ENCODE measurements at regions of chr12 and their contacts with region 1.

Region 1: GRCh38 chr12:54749191-54749818 is 101.1 kb upstream of the DCD start:
- DNase-seq: peak in 7 of 9 donors; percentile 33 to 73 (median 63)
- ATAC-seq: peak; percentile 91
- H3K4me3 ChIP-seq: no peak overlapping the region
- H3K4me3 Mint-ChIP-seq: peak overlapping the region in 8 of 10 donors; percentile 24 to 79 (median 62)
- H3K27ac ChIP-seq: no peak overlapping the region
- H3K27ac Mint-ChIP-seq: peak overlapping the region in 6 of 9 donors; percentile 33 to 84 (median 55)
- H3K4me1 ChIP-seq: peaks cover 4 to 16% of the 10 kb centered on the region in 2 donors
- H3K4me1 Mint-ChIP-seq: peaks cover 10 to 38% (median 30%) of the 10 kb centered on the region in 7 donors
- H3K27me3 ChIP-seq: no peaks in the 10 kb centered on the region
- H3K27me3 Mint-ChIP-seq: peaks cover 0 to 26% (median 0%) of the 10 kb centered on the region in 5 donors

Region 2: DNA sequence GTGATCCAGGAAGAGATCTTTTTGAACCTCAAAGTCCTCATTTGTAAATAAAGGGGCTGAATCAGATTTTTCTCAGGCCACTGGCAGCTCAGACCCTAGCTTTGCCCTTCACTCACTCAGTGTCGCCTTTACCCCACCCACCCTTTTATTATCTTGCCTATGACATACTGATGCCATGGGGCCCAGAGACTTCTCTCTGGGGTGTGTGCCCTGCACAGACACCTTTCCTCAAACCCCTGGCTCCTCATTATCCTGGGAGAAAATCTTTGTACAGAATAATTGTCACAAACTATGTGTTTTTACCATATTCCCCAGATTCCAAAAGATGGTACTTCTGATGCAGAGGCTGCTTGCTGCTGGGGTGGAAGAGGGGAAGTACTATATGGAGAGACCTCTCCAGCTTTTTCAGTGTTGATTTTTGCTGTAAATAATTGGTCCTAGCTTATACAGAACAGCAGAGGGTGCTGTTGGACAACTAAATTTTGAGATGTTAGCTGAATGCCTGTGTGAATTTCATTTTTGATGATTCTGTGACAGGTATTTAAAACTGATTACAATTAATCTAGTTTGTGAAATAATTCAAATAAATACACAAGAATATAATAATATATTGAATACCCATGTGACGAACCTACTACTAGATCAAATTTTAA is 47.2 kb before region 1 on chr12:
- CTCF ChIA-PET with region 1: interaction called, 10 read pairs
- POLR2A ChIA-PET with region 1: no interaction called
- intact Hi-C with region 1: loop called in 1 of 2 experiments (anchors 1 kb)
- DNase-seq: peak in 7 of 9 donors; percentile 16 to 67 (median 56)
- ATAC-seq: peak; percentile 81
- H3K4me3 ChIP-seq: no peak overlapping the region
- H3K4me3 Mint-ChIP-seq: no peak overlapping the region
- H3K27ac ChIP-seq: no peak overlapping the region
- H3K27ac Mint-ChIP-seq: no peak overlapping the region
- H3K4me1 ChIP-seq: no peaks in the 10 kb centered on the region
- H3K4me1 Mint-ChIP-seq: no peaks in the 10 kb centered on the region
- H3K27me3 ChIP-seq: no peaks in the 10 kb centered on the region
- H3K27me3 Mint-ChIP-seq: peaks cover 0 to 27% (median 6%) of the 10 kb centered on the region in 5 donors

Region 3: GRCh38 chr12:54759751-54760150 is 10.4 kb after region 1 on chr12:
- CTCF ChIA-PET with region 1: interaction called, 28 read pairs
- POLR2A ChIA-PET with region 1: interaction called, 4 read pairs
- intact Hi-C with region 1: loop called in 1 of 2 experiments (anchors 1 kb)
- DNase-seq: peak in 3 of 9 donors; percentile 14 to 45 (median 26)
- ATAC-seq: no peak
- H3K4me3 ChIP-seq: no peak overlapping the region
- H3K4me3 Mint-ChIP-seq: no peak overlapping the region
- H3K27ac ChIP-seq: no peak overlapping the region
- H3K27ac Mint-ChIP-seq: no peak overlapping the region
- H3K4me1 ChIP-seq: no peaks in the 10 kb centered on the region
- H3K4me1 Mint-ChIP-seq: peaks cover 0 to 20% (median 4%) of the 10 kb centered on the region in 7 donors
- H3K27me3 ChIP-seq: no peaks in the 10 kb centered on the region
- H3K27me3 Mint-ChIP-seq: peaks cover 0 to 24% (median 0%) of the 10 kb centered on the region in 5 donors

Region 4: DNA sequence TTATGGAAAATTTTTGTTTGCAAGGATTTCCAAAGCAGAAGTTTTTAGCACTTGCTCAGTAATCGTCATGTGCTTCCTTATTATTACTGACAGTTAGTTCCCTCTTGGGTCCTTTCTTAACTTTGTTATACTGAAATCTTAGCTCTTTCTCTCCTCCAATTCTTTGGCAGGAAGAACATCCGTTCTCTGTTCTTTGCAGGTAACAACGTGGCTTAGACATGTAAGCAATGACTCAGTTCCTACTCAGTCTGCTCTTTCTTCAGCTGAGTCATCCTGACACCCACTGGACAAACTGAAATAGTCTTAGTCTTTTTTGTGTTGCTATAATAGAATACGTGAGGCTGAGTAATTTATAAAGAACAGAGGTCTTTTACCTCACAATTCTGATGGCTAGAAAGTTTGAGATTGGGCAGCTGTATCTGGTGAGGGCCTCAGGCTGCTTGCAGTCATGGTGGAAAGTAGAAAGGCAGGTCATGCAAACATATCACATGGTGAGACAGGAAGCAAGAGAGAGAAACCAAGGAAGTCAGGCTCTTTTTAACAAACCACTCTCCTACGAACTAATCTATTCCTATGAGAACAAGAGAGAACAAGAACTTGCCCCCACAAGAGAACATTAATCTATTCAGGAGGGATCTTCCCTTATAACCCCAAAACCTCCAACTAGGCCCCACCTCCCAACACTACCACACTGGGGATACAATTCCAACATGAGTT is 186.1 kb after region 1 on chr12:
- CTCF ChIA-PET with region 1: interaction called, 9 read pairs
- POLR2A ChIA-PET with region 1: interaction called, 4 read pairs
- intact Hi-C with region 1: loop called (anchors 1 kb)
- DNase-seq: peak in 8 of 9 donors; percentile 40 to 67 (median 51)
- ATAC-seq: peak; percentile 88
- H3K4me3 ChIP-seq: no peak overlapping the region
- H3K4me3 Mint-ChIP-seq: peak overlapping the region; percentile 0 to 74 (median 62)
- H3K27ac ChIP-seq: peak overlapping the region; percentile 29
- H3K27ac Mint-ChIP-seq: peak overlapping the region; percentile 60 to 98 (median 88)
- H3K4me1 ChIP-seq: peaks cover 36 to 39% of the 10 kb centered on the region in 2 donors
- H3K4me1 Mint-ChIP-seq: peaks cover 28 to 56% (median 53%) of the 10 kb centered on the region in 7 donors
- H3K27me3 ChIP-seq: no peaks in the 10 kb centered on the region
- H3K27me3 Mint-ChIP-seq: no peaks in the 10 kb centered on the region

Region 5: GRCh38 chr12:54984658-54985376 is 235.5 kb after region 1 on chr12 and contains the start of gene TESPA1:
- CTCF ChIA-PET with region 1: interaction called, 4 read pairs
- POLR2A ChIA-PET with region 1: interaction called, 19 read pairs
- intact Hi-C with region 1: no loop called
- DNase-seq: peak; percentile 55 to 94 (median 90)
- ATAC-seq: peak; percentile 93
- H3K4me3 ChIP-seq: peak within 1 kb of the TSS; percentile 67
- H3K4me3 Mint-ChIP-seq: peak within 1 kb of the TSS; percentile 90 to 98 (median 95)
- H3K27ac ChIP-seq: peak within 1 kb of the TSS; percentile 94
- H3K27ac Mint-ChIP-seq: peak within 1 kb of the TSS; percentile 95 to 100 (median 98)
- H3K4me1 ChIP-seq: peaks cover 49 to 51% of the 10 kb centered on the region in 2 donors
- H3K4me1 Mint-ChIP-seq: peaks cover 45 to 78% (median 69%) of the 10 kb centered on the region in 7 donors
- H3K27me3 ChIP-seq: no peaks in the 10 kb centered on the region
- H3K27me3 Mint-ChIP-seq: no peaks in the 10 kb centered on the region
- total RNA-seq, gene TESPA1: 120 to 301 (median 186) TPM

Region 6: DNA sequence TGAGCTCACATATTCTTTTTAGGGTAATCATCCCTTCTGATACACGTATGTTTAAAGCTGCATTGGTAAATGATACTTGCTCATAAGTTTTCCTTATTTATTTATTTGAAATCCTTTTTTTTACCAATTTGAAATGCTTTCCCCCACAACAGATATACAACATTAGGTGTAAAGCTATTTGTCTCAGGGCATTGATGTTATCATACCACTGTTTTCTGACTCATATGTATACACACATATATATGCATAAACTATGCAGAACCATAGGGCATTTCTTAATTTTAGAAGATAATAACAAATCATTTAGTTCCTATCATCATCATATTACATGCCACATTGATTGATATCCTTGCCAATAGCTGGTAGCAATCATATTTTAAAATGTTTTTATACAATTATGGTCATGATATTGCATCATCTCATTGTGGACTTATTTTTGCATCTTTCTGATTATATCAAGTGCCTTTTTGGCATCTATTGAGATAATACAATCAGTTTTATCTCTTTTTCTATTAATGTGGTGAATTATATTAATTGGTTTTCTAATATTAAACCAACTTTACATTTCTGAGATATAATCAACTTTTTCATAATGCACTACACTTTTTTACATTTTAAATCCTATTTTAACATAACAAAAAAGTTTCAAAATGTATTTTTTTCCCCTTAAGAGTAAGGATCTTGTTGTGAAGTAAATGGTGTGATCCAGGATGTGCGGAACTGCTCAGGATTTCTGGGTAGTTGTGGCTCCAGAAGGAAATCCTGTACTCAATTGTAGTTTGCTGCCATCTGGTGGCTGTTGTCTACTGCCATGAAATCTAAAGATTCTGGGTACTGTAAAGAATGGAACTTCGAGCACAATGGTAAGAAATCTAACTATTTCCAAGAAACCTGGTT is 393.6 kb after region 1 on chr12:
- CTCF ChIA-PET with region 1: interaction called, 3 read pairs
- POLR2A ChIA-PET with region 1: no interaction called
- intact Hi-C with region 1: loop called (anchors 1 to 2 kb)
- DNase-seq: peak in 6 of 9 donors; percentile 10 to 41 (median 20)
- ATAC-seq: peak; percentile 29
- H3K4me3 ChIP-seq: no peak overlapping the region
- H3K4me3 Mint-ChIP-seq: no peak overlapping the region
- H3K27ac ChIP-seq: no peak overlapping the region
- H3K27ac Mint-ChIP-seq: no peak overlapping the region
- H3K4me1 ChIP-seq: no peaks in the 10 kb centered on the region
- H3K4me1 Mint-ChIP-seq: peaks cover 0 to 6% (median 0%) of the 10 kb centered on the region in 7 donors
- H3K27me3 ChIP-seq: no peaks in the 10 kb centered on the region
- H3K27me3 Mint-ChIP-seq: peaks cover 0 to 35% (median 0%) of the 10 kb centered on the region in 5 donors